Activated T-helper 1 cell treated with anti-CD3 and anti-CD28 coated beads, Interleukin-12 subunit alpha, Interleukin-12 subunit beta, Interleukin-2, Interleukin-4 antibody, amounts not matched to agents 30 ng/mL and 10 ng/mL and 1 ng/mL, durations not matched to agents 14 hours and 24 hours and 36 hours (primary cell): ENCODE measurements at regions of chr14 and their contacts with region 1.

Region 1: GRCh38 chr14:63478010-63478409 is 65.2 kb downstream of the PPP2R5E start:
- DNase-seq: peak; percentile 45
- H3K4me3 Mint-ChIP-seq: peak overlapping the region; percentile 27
- H3K27ac Mint-ChIP-seq: peak overlapping the region; percentile 57
- H3K4me1 Mint-ChIP-seq: peaks cover 47% of the 10 kb centered on the region
- H3K27me3 Mint-ChIP-seq: no peaks in the 10 kb centered on the region

Region 2: GRCh38 chr14:63437953-63438757 is 39.9 kb before region 1 on chr14:
- intact Hi-C with region 1: loop called (anchors 2 kb)
- DNase-seq: peak; percentile 30
- H3K4me3 Mint-ChIP-seq: peak overlapping the region; percentile 61
- H3K27ac Mint-ChIP-seq: peak overlapping the region; percentile 53
- H3K4me1 Mint-ChIP-seq: peaks cover 45% of the 10 kb centered on the region
- H3K27me3 Mint-ChIP-seq: no peaks in the 10 kb centered on the region

Region 3: GRCh38 chr14:63493246-63493645 is 15.2 kb after region 1 on chr14:
- intact Hi-C with region 1: no loop called
- DNase-seq: no peak
- H3K4me3 Mint-ChIP-seq: no peak overlapping the region
- H3K27ac Mint-ChIP-seq: no peak overlapping the region
- H3K4me1 Mint-ChIP-seq: peaks cover 14% of the 10 kb centered on the region
- H3K27me3 Mint-ChIP-seq: no peaks in the 10 kb centered on the region

Region 4: GRCh38 chr14:63510538-63510937 is 32.5 kb after region 1 on chr14:
- intact Hi-C with region 1: loop called (anchors 2 kb)
- DNase-seq: peak; percentile 14
- H3K4me3 Mint-ChIP-seq: peak overlapping the region; percentile 32
- H3K27ac Mint-ChIP-seq: peak overlapping the region; percentile 87
- H3K4me1 Mint-ChIP-seq: peaks cover 63% of the 10 kb centered on the region
- H3K27me3 Mint-ChIP-seq: no peaks in the 10 kb centered on the region

Region 5: DNA sequence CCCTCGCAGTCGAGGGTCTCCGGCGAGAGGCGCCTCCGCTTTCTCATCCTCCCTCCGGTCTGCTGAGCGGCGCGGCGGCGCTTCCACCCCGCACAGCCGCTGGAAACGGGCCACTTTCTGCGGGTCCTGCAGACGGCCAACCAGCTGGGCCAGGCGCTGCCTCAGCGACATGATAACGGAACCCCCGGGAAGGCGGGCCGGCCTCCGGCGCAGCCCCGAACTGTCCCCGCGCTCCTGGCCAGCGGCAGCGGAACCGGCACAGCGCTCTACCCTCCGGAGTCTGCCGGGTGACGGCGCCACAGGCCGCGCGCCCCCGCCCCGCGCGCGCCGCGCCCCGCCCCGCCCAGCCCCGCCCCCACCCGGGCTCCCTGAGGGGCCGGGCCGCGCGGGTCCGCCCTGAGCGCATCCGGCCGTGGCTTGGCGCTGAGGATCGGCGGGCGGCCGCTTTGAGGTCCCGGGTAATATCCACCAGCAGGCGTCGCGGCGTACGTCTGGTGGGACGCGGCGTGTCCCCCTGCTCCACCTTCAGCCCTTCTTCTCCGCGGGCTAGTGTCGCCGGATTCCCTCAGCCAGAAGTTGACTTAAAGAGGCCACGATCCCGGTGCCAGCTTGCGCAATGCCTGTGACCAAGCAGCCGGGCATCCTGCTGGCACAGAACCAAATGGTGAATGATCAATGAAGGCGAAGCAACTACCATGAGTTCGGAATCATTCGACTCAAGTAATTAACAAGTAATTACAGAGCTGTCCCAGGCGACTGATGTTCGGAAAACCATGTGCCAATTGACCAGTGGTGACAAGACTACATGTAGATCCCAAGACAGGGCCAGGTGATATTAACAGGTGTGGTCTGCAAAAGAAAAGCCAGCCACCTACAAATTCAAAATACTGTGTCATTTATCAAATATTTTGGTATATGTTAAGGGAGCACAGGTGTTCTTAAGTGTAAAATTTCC is 250.0 kb after region 1 on chr14 and contains the start of gene SGPP1:
- intact Hi-C with region 1: loop called (anchors 5 kb)
- DNase-seq: peak; percentile 81
- H3K4me3 Mint-ChIP-seq: peak within 1 kb of the TSS; percentile 99
- H3K27ac Mint-ChIP-seq: peak within 1 kb of the TSS; percentile 99
- H3K4me1 Mint-ChIP-seq: peaks cover 33% of the 10 kb centered on the region
- H3K27me3 Mint-ChIP-seq: peaks cover 16% of the 10 kb centered on the region
- total RNA-seq, gene SGPP1: 14.7 and 14.8 TPM in 2 replicates

Region 6: DNA sequence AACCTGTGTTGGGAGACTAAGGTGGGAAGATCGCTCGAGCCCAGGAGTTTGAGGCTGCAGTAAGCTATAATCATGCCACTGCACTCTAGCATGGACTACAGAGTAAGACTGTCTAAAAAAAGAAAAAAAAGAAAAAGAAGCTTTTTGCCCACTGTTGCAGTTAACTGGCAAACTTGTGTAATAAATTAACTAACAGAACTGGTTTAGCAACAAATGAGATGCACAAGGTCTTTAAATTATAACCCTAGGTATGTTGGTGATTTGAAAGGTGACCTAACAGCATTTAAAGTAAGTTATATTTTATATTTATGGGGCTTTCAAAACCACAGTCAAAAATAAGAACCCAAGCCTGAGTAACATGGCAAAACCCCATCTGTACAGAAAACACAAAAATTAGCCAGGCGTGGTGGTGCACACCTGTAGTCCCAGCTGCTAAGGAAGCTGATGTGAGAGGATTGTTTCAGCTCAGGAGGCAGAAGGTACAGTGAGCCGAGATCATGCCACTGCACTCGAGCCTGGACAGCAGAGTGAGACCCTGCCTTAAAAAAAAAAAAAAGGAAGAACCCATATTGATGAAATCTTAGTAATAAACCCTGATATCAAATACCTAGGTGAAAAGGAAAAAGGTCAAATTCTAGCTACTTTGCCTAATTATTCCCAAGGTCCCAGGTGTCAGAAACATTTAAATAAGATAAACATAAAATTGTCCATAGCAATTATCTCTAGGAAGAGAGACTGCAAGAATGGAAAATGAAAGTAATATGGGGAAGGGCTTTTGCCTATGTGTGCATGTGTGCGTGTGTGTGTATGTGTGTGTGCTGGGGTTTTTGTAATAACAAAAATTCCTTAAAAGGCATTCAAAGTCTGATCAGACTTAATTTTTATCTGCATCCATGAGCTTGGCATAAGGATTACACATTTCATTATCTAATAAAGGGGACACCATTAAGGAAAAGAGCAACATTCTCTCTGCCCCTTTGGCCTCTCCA is 390.2 kb after region 1 on chr14:
- intact Hi-C with region 1: loop called (anchors 2 kb)
- DNase-seq: peak; percentile 11
- H3K4me3 Mint-ChIP-seq: peak overlapping the region; percentile 54
- H3K27ac Mint-ChIP-seq: peak overlapping the region; percentile 69
- H3K4me1 Mint-ChIP-seq: peaks cover 78% of the 10 kb centered on the region
- H3K27me3 Mint-ChIP-seq: no peaks in the 10 kb centered on the region